ENCODE measurements at regions of chr2 and their contacts with region 1.

Region 1: GRCh38 chr2:185291035-185291647 is 447.5 kb upstream of the FSIP2 start:
- DNase-seq: peak; percentile 71
- H3K4me3 Mint-ChIP-seq: no peak overlapping the region
- H3K27ac Mint-ChIP-seq: peak overlapping the region; percentile 18
- H3K4me1 Mint-ChIP-seq: no peaks in the 10 kb centered on the region
- H3K27me3 Mint-ChIP-seq: no peaks in the 10 kb centered on the region
- CTCF ChIP-seq: peak; percentile 84

Region 2: GRCh38 chr2:185063761-185064160 is 227.4 kb before region 1 on chr2:
- CTCF ChIA-PET with region 1: no interaction called
- POLR2A ChIA-PET with region 1: no interaction called
- intact Hi-C with region 1: no loop called
- DNase-seq: no peak
- H3K4me3 Mint-ChIP-seq: no peak overlapping the region
- H3K27ac Mint-ChIP-seq: no peak overlapping the region
- H3K4me1 Mint-ChIP-seq: peaks cover 6% of the 10 kb centered on the region
- H3K27me3 Mint-ChIP-seq: no peaks in the 10 kb centered on the region
- CTCF ChIP-seq: no peak

Region 3: GRCh38 chr2:185074156-185074555 is 217.0 kb before region 1 on chr2:
- CTCF ChIA-PET with region 1: no interaction called
- POLR2A ChIA-PET with region 1: no interaction called
- intact Hi-C with region 1: no loop called
- DNase-seq: no peak
- H3K4me3 Mint-ChIP-seq: no peak overlapping the region
- H3K27ac Mint-ChIP-seq: no peak overlapping the region
- H3K4me1 Mint-ChIP-seq: no peaks in the 10 kb centered on the region
- H3K27me3 Mint-ChIP-seq: no peaks in the 10 kb centered on the region
- CTCF ChIP-seq: no peak

Region 4: DNA sequence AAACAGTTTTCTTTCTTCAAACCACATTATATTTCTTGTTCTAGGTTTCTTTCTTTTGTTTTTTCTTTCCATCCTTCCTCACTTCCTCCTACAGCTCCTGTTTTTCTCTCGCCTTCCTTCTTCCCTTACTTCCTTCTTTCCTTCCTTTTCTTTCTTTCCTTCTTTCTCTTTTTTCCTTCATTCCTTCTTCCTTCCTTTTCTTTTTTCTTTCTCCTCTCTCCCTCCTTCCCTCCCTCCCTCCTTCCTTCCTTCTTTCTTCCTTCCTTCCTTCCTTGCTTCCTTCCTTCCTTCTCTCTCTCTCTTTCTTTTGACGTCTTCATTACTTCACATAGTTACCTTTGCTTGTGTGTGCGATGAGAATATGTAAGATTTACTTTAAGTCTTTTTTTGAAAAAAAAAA is 22.5 kb before region 1 on chr2:
- CTCF ChIA-PET with region 1: no interaction called
- POLR2A ChIA-PET with region 1: no interaction called
- intact Hi-C with region 1: no loop called
- DNase-seq: no peak
- H3K4me3 Mint-ChIP-seq: no peak overlapping the region
- H3K27ac Mint-ChIP-seq: no peak overlapping the region
- H3K4me1 Mint-ChIP-seq: no peaks in the 10 kb centered on the region
- H3K27me3 Mint-ChIP-seq: no peaks in the 10 kb centered on the region
- CTCF ChIP-seq: no peak

Region 5: GRCh38 chr2:185404578-185404977 is 113.4 kb after region 1 on chr2:
- CTCF ChIA-PET with region 1: interaction called, 4 read pairs
- POLR2A ChIA-PET with region 1: no interaction called
- intact Hi-C with region 1: loop called (anchors 2 kb)
- DNase-seq: no peak
- H3K4me3 Mint-ChIP-seq: no peak overlapping the region
- H3K27ac Mint-ChIP-seq: no peak overlapping the region
- H3K4me1 Mint-ChIP-seq: no peaks in the 10 kb centered on the region
- H3K27me3 Mint-ChIP-seq: no peaks in the 10 kb centered on the region
- CTCF ChIP-seq: no peak

Region 6: GRCh38 chr2:185738679-185739472 is 447.7 kb after region 1 on chr2 and contains the start of gene FSIP2:
- CTCF ChIA-PET with region 1: interaction called, 3 read pairs
- POLR2A ChIA-PET with region 1: no interaction called
- intact Hi-C with region 1: loop called (anchors 1 kb)
- DNase-seq: peak; percentile 65
- H3K4me3 Mint-ChIP-seq: peak within 1 kb of the TSS; percentile 58
- H3K27ac Mint-ChIP-seq: no peak within 1 kb of the TSS
- H3K4me1 Mint-ChIP-seq: no peaks in the 10 kb centered on the region
- H3K27me3 Mint-ChIP-seq: no peaks in the 10 kb centered on the region
- CTCF ChIP-seq: peak; percentile 49
- total RNA-seq, gene FSIP2: 0.12 and 0.20 TPM in 2 replicates

Region 7: DNA sequence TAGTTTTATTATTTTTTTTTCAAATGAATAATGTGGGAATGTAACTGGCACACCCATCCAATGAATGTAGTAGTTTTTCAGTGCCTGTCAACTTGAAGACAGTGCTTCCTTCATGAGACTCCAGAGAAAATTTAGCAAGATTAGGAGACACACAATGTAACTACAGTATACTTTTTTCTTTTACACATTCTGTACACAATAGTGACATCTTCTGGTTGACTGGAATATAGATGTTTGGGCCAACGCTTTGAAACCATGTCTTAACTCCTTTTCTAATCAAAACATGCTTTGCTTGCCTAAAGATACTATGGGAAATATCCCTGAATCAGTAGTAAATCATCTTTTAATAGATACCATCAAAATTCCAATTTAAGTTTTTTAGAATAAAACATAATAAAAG is 965.4 kb after region 1 on chr2:
- CTCF ChIA-PET with region 1: interaction called, 19 read pairs
- POLR2A ChIA-PET with region 1: no interaction called
- intact Hi-C with region 1: loop called (anchors 1 kb)
- DNase-seq: peak; percentile 60
- H3K4me3 Mint-ChIP-seq: no peak overlapping the region
- H3K27ac Mint-ChIP-seq: no peak overlapping the region
- H3K4me1 Mint-ChIP-seq: no peaks in the 10 kb centered on the region
- H3K27me3 Mint-ChIP-seq: no peaks in the 10 kb centered on the region
- CTCF ChIP-seq: peak; percentile 54